ENCODE measurements at regions of chr18 and their contacts with region 1.

Region 1: GRCh38 chr18:58998401-58999203 is 133.9 kb downstream of the ZNF532 start:
- DNase-seq: peak; percentile 75 to 88 (median 78)
- ATAC-seq: peak; percentile 82 to 84
- H3K4me3 ChIP-seq: no peak overlapping the region
- H3K27ac ChIP-seq: peak overlapping the region; percentile 91
- H3K4me1 ChIP-seq: peaks cover 2% of the 10 kb centered on the region
- H3K27me3 ChIP-seq: no peaks in the 10 kb centered on the region

Region 2: DNA sequence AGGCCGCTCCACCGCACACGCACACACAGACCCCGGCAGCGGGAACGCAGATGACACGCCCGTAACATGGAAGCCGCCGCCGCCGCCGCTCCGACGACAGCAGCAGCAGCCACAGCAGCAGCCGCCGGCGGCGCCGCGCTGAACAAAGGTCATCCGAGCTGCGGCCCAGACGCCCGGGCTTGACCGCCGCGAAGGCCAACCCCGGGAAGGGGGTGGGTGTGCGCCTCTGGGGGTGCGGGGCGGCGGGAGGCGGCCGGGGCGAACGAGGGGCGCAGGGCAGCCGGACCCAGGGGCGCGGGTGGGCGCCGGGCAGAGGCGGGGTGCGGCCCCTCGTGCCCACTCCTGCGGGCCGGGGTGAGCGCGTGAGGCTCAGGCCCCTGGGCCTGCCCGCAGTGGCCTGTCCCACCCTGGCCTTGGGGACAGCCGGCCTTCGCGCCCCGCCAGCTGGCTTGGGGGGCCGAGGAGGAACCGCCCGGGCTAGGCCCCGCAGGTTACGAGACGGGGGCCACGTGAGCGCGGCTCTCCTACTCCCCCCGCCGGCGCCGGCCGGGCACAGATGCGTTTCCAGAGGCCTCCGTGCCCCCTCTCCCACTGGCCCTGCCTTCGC is 135.0 kb before region 1 on chr18:
- intact Hi-C with region 1: loop called in 1 of 4 experiments (anchors 10 kb)
- DNase-seq: peak; percentile 68 to 89 (median 86)
- ATAC-seq: peak; percentile 64 to 66
- H3K4me3 ChIP-seq: peak overlapping the region; percentile 73
- H3K27ac ChIP-seq: peak overlapping the region; percentile 97
- H3K4me1 ChIP-seq: peaks cover 20% of the 10 kb centered on the region
- H3K27me3 ChIP-seq: no peaks in the 10 kb centered on the region